ENCODE measurements at regions of chr16 and their contacts with region 1.

Region 1: GRCh38 chr16:72664509-72665225 is 383.3 kb downstream of the ZFHX3 start:
- DNase-seq: peak; percentile 96
- CTCF ChIP-seq: no peak

Region 2: GRCh38 chr16:72961121-72961763 is 296.6 kb after region 1 on chr16:
- in situ Hi-C with region 1: no loop called
- DNase-seq: no peak
- CTCF ChIP-seq: no peak

Region 3: DNA sequence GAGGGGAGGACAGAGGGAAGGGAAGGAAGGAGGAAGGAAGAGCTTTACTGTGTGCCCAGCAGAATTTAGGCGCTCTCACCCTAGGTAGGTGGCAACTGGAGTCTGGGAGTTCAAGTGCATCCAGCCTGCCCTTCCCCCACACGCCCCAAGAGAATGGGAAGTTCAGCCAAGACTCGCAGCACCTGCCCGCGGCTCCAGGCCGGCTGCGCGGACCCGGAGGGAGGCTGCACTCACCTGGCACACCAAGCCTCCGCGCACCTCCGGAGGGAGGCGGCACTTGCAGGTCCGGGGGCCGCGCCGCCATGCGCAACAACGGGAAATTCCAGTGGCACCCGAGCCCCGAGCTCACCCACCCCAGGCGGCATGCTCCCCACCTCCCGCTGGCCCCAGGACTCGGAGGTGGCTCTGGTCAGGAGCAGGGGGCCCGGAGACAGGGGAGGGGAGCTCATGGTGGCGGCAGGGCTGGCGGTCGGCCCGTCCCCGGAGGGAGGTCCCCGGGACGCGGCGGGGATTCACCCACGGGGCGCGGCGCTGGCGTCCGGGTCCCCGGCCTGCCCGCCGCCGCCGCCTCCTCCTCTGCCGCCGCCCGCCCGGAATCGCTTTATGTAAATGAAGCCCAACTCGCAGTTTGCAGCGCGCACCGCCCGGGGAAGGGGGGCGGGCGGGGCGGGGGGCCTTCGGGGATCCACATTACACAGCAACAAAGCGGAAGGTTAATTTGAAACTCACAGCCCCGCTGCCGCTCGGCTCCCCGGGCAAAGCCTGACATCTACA is 383.0 kb after region 1 on chr16 and contains the start of gene ZFHX3:
- in situ Hi-C with region 1: loop called (anchors 25 kb)
- DNase-seq: peak; percentile 77
- CTCF ChIP-seq: no peak

Measured in GM13976 (cell line).